H1 (cell line): ENCODE measurements at regions of chr2 and their contacts with region 1.

Region 1: DNA sequence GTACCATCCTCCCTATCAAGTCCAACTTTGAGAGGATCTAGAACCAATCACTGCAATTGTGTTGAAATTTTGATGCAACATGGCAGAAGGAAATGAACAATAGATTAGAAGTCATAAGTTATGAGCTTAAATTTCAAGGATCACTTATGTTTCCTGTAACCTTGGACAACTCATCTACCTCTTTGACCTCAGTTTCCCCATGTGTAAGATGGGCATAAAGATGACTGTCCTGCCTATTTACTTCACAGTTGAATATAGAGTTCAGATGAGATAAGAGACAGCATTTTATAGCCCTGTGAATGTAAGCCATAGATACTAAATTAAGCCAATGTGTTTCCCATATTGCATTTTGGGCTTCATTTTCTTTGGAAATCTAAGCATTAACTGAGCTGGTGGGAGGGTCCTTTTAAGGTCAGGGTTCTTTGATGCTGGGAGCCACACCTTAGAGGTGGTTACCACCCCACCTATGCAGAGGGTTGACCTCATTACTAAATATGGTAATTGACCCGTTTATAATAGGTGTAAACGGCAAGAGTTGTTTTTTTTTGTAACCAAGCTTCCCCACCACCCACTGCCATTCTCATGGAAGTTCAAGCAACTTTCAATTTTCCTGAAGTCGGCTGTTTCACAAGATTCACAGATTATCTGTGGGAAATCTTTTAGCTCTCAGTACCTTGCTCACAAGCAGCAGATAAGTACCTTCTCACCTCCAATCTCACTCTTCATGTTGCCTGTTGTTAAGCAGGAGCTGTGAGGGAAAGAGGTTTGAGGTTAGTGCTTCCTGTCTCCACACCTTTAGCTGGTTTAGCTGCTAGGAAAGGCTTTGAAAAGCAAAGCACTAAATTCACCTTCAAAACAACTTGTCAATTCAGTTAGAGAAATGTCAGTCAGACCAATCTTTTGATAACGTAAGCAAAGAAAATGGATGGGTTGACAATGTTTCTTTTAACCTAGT is 13.3 kb downstream of the CD28 start:
- DNase-seq: no peak
- H3K4me3 ChIP-seq: no peak overlapping the region
- H3K27ac ChIP-seq: no peak overlapping the region
- H3K4me1 ChIP-seq: peaks cover 1 to 19% (median 12%) of the 10 kb centered on the region in 4 experiments; a peak in 4 of 7 replicates
- H3K27me3 ChIP-seq: no peaks in the 10 kb centered on the region
- CTCF ChIP-seq: no peak
- EP300 ChIP-seq: no peak
- POLR2A ChIP-seq: no peak
- RAD21 ChIP-seq: no peak

Region 2: GRCh38 chr2:203650860-203651613 is 68.7 kb before region 1 on chr2:
- CTCF ChIA-PET with region 1: no interaction called
- POLR2A ChIA-PET with region 1: no interaction called
- DNase-seq: no peak
- H3K4me3 ChIP-seq: no peak overlapping the region
- H3K27ac ChIP-seq: no peak overlapping the region
- H3K4me1 ChIP-seq: no peaks in the 10 kb centered on the region
- H3K27me3 ChIP-seq: no peaks in the 10 kb centered on the region
- CTCF ChIP-seq: peak in 2 of 3 experiments; percentile 18 to 44; a peak in 2 of 4 replicates
- EP300 ChIP-seq: no peak
- POLR2A ChIP-seq: no peak
- RAD21 ChIP-seq: peak; percentile 75 to 76

Region 3: GRCh38 chr2:203730076-203730729 is 10.5 kb after region 1 on chr2:
- CTCF ChIA-PET with region 1: interaction called, 11 read pairs
- POLR2A ChIA-PET with region 1: no interaction called
- DNase-seq: no peak
- H3K4me3 ChIP-seq: no peak overlapping the region
- H3K27ac ChIP-seq: no peak overlapping the region
- H3K4me1 ChIP-seq: peaks cover 0 to 3% (median 0%) of the 10 kb centered on the region in 4 experiments; a peak in 3 of 7 replicates
- H3K27me3 ChIP-seq: no peaks in the 10 kb centered on the region
- CTCF ChIP-seq: no peak
- EP300 ChIP-seq: no peak
- POLR2A ChIP-seq: no peak
- RAD21 ChIP-seq: no peak